Activated B cell treated with CpG ODN at 0.5 μM for 24 hours (primary cell): ENCODE measurements at regions of chr10 and their contacts with region 1.

Region 1: DNA sequence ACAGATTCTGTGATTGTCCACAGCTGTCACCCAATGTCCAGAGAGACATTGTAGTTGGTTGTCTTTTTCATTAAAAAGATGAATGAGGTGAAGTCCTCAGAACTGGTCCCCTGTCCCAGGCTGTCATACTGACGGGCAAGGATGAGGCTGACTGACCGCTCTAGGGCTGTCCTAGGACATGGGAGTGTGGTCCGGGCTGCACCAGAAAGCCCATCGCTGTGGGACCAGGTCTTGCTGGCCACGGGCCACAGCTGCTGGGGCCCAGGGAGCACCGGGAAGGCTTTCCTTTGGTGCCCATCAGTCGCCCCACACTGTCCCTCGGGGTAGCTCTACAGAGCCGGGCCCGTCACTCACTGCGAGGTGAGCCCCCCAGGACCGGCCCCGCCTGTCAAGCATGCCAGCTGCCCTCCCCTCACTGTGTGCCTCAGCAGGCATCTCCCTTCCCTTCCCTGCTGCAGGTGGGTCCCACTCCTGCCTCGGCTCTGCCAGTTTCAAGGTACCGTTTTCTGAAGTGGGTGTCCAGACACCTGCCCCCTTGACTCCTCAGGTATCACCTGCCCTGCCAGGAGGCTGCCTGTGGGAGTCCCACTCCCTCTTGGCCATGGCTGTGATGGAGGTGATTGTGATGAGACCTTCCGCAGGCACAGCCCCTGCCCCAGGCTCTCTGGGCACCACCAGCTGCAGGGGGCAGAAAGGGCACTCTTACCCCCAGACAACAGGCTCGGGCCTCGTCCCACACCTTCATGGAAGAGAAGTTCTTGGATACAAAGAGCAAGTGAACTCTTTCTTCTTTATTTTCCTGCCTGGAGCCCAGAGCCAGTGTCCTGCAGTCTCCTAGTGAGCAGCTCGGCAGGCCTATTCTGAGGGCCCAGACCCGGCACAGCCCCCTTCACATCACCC is 21.7 kb downstream of the LRRC27 start:
- DNase-seq: no peak
- ATAC-seq: no peak
- H3K4me3 Mint-ChIP-seq: no peak overlapping the region
- H3K27ac Mint-ChIP-seq: no peak overlapping the region
- H3K4me1 Mint-ChIP-seq: peaks cover 7% of the 10 kb centered on the region
- H3K27me3 Mint-ChIP-seq: no peaks in the 10 kb centered on the region
- CTCF ChIP-seq: no peak

Region 2: GRCh38 chr10:132142411-132143161 is 211.1 kb before region 1 on chr10:
- CTCF ChIA-PET with region 1: no interaction called
- POLR2A ChIA-PET with region 1: no interaction called
- intact Hi-C with region 1: loop called (anchors 1 kb)
- DNase-seq: peak; percentile 51
- ATAC-seq: peak; percentile 74
- H3K4me3 Mint-ChIP-seq: no peak overlapping the region
- H3K27ac Mint-ChIP-seq: no peak overlapping the region
- H3K4me1 Mint-ChIP-seq: no peaks in the 10 kb centered on the region
- H3K27me3 Mint-ChIP-seq: no peaks in the 10 kb centered on the region
- CTCF ChIP-seq: peak; percentile 69

Region 3: DNA sequence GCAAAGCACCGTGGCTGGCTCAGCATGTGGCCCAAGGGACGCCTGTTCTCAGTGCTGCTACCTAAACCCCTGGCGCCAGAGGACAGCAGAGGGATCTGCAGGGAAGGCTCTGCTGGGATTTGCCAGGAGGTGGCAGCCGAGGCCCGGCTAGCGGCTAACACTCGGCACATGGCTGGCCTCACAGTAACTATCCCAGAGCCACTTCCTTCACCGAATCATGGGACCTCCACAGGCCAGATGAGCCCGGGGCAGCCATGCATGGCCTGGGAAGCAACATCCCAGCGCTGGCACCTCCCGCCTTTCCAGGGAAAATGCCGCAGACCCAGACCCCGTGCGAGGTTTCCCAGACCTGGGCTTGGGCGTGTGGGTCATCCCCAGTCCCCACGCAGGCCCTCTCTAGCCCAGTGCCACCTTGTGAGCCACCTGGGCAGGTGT is 130.5 kb before region 1 on chr10:
- CTCF ChIA-PET with region 1: interaction called, 6 read pairs
- POLR2A ChIA-PET with region 1: no interaction called
- intact Hi-C with region 1: loop called (anchors 1 kb)
- DNase-seq: peak; percentile 43
- ATAC-seq: peak; percentile 97
- H3K4me3 Mint-ChIP-seq: no peak overlapping the region
- H3K27ac Mint-ChIP-seq: no peak overlapping the region
- H3K4me1 Mint-ChIP-seq: peaks cover 2% of the 10 kb centered on the region
- H3K27me3 Mint-ChIP-seq: no peaks in the 10 kb centered on the region
- CTCF ChIP-seq: no peak

Region 4: GRCh38 chr10:132371641-132372081 is 18.0 kb after region 1 on chr10:
- CTCF ChIA-PET with region 1: no interaction called
- POLR2A ChIA-PET with region 1: no interaction called
- intact Hi-C with region 1: no loop called
- DNase-seq: no peak
- ATAC-seq: no peak
- H3K4me3 Mint-ChIP-seq: no peak overlapping the region
- H3K27ac Mint-ChIP-seq: no peak overlapping the region
- H3K4me1 Mint-ChIP-seq: no peaks in the 10 kb centered on the region
- H3K27me3 Mint-ChIP-seq: peaks cover 7% of the 10 kb centered on the region
- CTCF ChIP-seq: no peak

Region 5: GRCh38 chr10:132551093-132551807 is 197.5 kb after region 1 on chr10:
- CTCF ChIA-PET with region 1: no interaction called
- POLR2A ChIA-PET with region 1: no interaction called
- intact Hi-C with region 1: no loop called
- DNase-seq: no peak
- ATAC-seq: peak; percentile 32
- H3K4me3 Mint-ChIP-seq: peak overlapping the region; percentile 72
- H3K27ac Mint-ChIP-seq: peak overlapping the region; percentile 91
- H3K4me1 Mint-ChIP-seq: peaks cover 55% of the 10 kb centered on the region
- H3K27me3 Mint-ChIP-seq: no peaks in the 10 kb centered on the region
- CTCF ChIP-seq: no peak